Calu3 (cell line): ENCODE measurements at regions of chr1 and their contacts with region 1.

Region 1: GRCh38 chr1:110857964-110858948 is 14.7 kb upstream of the CD53 start:
- DNase-seq: no peak
- H3K4me3 Mint-ChIP-seq: no peak overlapping the region
- H3K27ac Mint-ChIP-seq: no peak overlapping the region
- H3K4me1 Mint-ChIP-seq: no peaks in the 10 kb centered on the region
- H3K27me3 Mint-ChIP-seq: peaks cover 37% of the 10 kb centered on the region
- CTCF ChIP-seq: no peak

Region 2: DNA sequence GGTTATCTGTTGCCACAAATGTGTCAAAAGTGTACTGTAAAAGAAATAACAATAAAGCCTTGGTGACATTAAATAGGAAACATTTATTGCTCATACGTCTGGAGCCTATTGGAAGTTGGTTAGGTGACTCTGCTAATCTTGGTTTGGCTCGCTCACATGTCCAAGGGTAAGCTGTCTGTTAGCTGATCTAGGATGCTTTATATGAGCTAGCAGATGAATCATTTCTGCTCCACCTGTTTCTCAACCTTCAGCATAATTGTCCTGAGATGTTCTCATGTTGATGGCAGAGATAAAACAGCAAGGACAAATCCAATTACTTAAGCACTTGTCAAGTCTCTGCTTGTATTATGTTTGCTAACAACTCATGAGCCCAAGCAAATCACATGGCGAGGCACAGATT is 41.3 kb before region 1 on chr1:
- CTCF ChIA-PET with region 1: no interaction called
- intact Hi-C with region 1: no loop called
- DNase-seq: no peak
- H3K4me3 Mint-ChIP-seq: no peak overlapping the region
- H3K27ac Mint-ChIP-seq: no peak overlapping the region
- H3K4me1 Mint-ChIP-seq: no peaks in the 10 kb centered on the region
- H3K27me3 Mint-ChIP-seq: peaks cover 17% of the 10 kb centered on the region
- CTCF ChIP-seq: no peak

Region 3: DNA sequence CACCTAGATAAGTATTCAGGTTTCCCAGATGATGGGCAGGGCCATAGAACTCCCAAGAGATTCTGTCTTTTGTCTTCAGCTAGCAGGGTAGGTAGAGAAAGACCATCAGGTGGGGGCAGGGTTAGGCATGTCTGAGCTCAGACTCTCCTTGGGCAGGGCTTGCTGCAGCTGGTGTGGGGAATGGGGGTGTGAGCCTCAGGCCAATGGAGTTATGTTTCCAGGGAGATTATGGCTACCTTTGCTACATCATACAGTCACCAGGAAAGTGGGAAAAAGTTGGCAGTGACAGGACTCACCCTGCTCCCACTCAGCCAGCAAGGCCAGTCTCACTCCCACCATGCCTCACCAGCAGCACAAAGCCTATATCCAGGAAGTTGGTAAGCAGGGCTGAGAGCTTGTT is 203.8 kb after region 1 on chr1:
- CTCF ChIA-PET with region 1: interaction called, 10 read pairs
- intact Hi-C with region 1: no loop called
- DNase-seq: no peak
- H3K4me3 Mint-ChIP-seq: no peak overlapping the region
- H3K27ac Mint-ChIP-seq: no peak overlapping the region
- H3K4me1 Mint-ChIP-seq: no peaks in the 10 kb centered on the region
- H3K27me3 Mint-ChIP-seq: no peaks in the 10 kb centered on the region
- CTCF ChIP-seq: no peak

Region 4: DNA sequence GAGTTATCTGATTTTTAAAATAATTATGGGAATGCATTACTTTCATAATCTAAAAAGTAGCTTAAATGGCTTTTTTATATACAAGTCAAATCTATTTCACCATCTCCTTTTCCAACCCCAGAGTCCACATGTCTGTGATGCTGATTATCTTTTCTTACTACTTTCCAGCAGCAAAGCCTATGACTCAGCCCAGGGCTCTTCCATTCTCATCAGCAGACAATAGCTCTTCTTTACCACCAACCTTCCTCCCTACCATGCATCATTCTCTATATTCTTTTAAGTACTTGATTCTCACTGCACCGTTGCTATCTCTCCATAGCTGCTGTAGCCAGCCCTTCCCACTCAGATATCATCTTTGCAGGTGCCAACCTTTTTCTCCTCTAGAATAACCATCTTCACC is 508.0 kb after region 1 on chr1:
- CTCF ChIA-PET with region 1: no interaction called
- intact Hi-C with region 1: no loop called
- DNase-seq: no peak
- H3K4me3 Mint-ChIP-seq: no peak overlapping the region
- H3K27ac Mint-ChIP-seq: no peak overlapping the region
- H3K4me1 Mint-ChIP-seq: no peaks in the 10 kb centered on the region
- H3K27me3 Mint-ChIP-seq: peaks cover 71% of the 10 kb centered on the region
- CTCF ChIP-seq: no peak